Sigmoid colon (tissue), 7 donors: ENCODE measurements at regions of chr11 and their contacts with region 1.

Region 1: DNA sequence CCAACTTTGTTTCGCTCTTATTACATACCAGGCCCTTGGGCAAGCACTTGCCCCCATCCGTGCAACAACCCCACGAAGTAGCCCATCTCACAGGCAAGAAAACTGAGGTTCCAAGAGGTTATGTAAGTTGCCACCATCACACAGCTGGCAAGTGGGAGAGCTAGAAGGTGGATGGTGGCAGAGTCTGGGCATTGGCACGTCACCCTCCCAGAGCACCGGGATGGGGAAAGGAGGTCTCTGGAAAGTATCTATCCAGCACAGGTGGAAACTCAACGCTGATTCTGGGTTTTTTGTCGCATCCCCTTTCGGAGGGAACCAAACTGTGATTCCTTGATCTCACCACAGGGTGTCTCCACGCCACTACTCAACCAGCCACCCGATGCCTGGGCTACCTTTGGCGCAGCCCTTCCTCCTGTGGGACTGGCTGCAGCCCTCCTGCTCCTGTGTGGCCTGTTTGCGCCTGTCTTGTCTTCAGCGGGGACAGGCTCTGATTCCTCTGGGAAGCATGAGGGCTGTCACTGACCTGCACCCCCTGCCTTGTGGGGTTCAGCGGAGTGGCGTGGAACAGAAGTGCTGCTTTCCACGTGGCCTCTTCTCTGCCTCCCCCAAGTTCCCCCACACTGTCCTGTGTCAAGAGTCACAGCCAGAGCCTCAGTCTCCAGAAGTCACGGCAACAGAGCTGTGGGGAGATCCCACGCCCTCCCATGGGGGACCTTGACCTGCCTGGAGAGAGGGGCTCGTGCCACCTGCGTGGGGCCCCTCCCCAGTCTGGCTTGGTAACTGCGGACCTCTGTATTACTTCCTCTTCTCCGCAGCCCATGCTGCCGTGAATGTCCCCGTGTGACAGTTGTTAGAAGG is 34.4 kb upstream of the TRIM29 start:
- DNase-seq: peak; percentile 87
- H3K4me3 ChIP-seq: no peak overlapping the region
- H3K27ac ChIP-seq: no peak overlapping the region
- H3K4me1 ChIP-seq: peaks cover 0 to 18% (median 18%) of the 10 kb centered on the region in 4 donors
- H3K27me3 ChIP-seq: peaks cover 0 to 27% (median 12%) of the 10 kb centered on the region in 3 donors
- CTCF ChIP-seq: peak; percentile 56 to 80 (median 76)
- EP300 ChIP-seq: no peak
- POLR2A ChIP-seq: no peak

Region 2: DNA sequence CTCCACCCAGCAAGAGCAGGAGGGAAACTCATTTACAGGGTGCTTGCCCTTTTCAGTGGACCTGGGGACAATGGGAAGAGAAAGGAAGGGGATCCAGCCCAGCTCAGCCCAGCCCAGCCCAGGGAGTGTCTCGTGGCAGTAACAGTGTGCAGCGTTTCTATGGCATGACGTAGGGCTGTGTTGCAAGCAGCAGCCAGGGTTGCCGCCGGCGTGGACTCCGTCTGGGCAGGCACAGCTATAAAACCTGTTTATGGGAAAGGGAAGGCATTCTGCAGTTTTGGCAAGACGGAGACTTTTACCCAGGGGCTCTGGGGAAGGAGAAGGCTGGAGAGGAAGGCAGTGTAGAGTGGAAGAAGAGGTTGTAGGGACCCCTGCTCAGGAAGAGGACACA is 43.5 kb before region 1 on chr11:
- intact Hi-C with region 1: loop called (anchors 2 kb)
- DNase-seq: peak; percentile 93
- H3K4me3 ChIP-seq: peak overlapping the region in 1 of 4 donors; percentile 12
- H3K27ac ChIP-seq: peak overlapping the region; percentile 53 to 89 (median 66)
- H3K4me1 ChIP-seq: peaks cover 0 to 23% (median 21%) of the 10 kb centered on the region in 4 donors
- H3K27me3 ChIP-seq: no peaks in the 10 kb centered on the region
- CTCF ChIP-seq: peak in 1 of 4 experiments; percentile 1
- EP300 ChIP-seq: peak in 1 of 4 donors; percentile 53
- POLR2A ChIP-seq: no peak

Region 3: GRCh38 chr11:120229451-120230424 is 57.5 kb after region 1 on chr11:
- intact Hi-C with region 1: loop called (anchors 1 kb)
- DNase-seq: no peak
- H3K4me3 ChIP-seq: no peak overlapping the region
- H3K27ac ChIP-seq: peak overlapping the region in 1 of 4 donors; percentile 20
- H3K4me1 ChIP-seq: peaks cover 0 to 17% (median 1%) of the 10 kb centered on the region in 4 donors
- H3K27me3 ChIP-seq: peaks cover 0 to 14% (median 6%) of the 10 kb centered on the region in 3 donors
- CTCF ChIP-seq: peak in 3 of 4 experiments; percentile 50 to 59 (median 56)
- EP300 ChIP-seq: no peak
- POLR2A ChIP-seq: no peak

Region 4: GRCh38 chr11:120527111-120527761 is 355.0 kb after region 1 on chr11:
- intact Hi-C with region 1: no loop called
- DNase-seq: no peak
- H3K4me3 ChIP-seq: no peak overlapping the region
- H3K27ac ChIP-seq: no peak overlapping the region
- H3K4me1 ChIP-seq: peaks cover 0 to 4% (median 0%) of the 10 kb centered on the region in 4 donors
- H3K27me3 ChIP-seq: peaks cover 0 to 11% (median 0%) of the 10 kb centered on the region in 3 donors
- CTCF ChIP-seq: no peak
- EP300 ChIP-seq: no peak
- POLR2A ChIP-seq: no peak